Posterior cingulate gyrus (tissue), 11 donors: ENCODE measurements at regions of chr1 and their contacts with region 1.

Region 1: GRCh38 chr1:109112652-109113285 is 1.1 kb upstream of the ELAPOR1 start:
- DNase-seq: peak; percentile 88 to 99 (median 96)

Region 2: GRCh38 chr1:108609483-108610049 is 503.2 kb before region 1 on chr1:
- intact Hi-C with region 1: no loop called
- DNase-seq: no peak

Region 3: GRCh38 chr1:109099938-109100773 is 12.6 kb before region 1 on chr1:
- intact Hi-C with region 1: loop called (anchors 1 kb)
- DNase-seq: peak; percentile 94 to 99 (median 96)

Region 4: GRCh38 chr1:109263597-109264398 is 151.0 kb after region 1 on chr1:
- intact Hi-C with region 1: loop called (anchors 10 kb)
- DNase-seq: peak; percentile 24 to 96 (median 75)